B cell (primary cell): ENCODE measurements at regions of chr4 and their contacts with region 1.

Region 1: DNA sequence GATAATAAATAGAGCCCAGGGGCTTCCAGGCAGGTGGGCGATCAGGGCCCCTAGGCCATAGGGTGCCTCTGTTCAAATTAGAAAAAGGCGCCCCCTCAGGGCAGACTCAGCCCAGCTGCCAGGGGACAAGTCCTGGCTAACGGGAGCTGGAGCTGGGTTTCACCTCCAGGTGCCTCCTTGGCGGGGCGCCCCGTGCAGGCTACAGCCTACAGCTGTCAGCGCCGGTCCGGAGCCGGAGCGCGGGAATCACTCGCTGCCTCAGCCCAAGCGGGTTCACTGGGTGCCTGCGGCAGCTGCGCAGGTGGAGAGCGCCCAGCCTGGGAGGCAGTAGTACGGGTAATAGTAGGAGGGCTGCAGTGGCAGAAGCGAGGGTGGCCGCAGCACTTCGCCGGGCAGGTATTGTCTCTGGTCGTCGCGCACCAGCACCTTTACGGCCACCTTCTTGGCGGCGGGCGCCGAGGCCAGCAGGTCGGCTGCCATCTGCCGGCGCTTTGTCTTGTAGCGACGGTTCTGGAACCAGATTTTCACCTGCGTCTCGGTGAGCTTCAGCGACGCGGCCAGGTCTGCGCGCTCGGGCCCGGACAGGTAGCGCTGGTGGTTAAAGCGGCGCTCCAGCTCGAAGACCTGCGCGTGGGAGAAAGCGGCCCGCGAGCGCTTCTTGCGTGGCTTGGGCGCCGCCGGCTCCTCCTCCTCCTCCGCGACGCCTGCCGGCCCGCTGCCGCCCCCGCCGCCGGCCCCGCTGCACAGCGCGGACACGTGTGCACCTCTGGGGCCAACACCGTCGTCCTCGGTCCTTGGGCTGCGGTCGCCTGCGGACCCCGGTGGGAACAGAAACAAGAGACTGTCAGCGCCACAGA is 2.4 kb downstream of the NKX3-2 start:
- DNase-seq: peak; percentile 76
- ATAC-seq: peak; percentile 25
- H3K4me3 ChIP-seq: peak overlapping the region in 2 of 5 experiments; percentile 0 to 21
- H3K4me3 Mint-ChIP-seq: peak overlapping the region; percentile 68
- H3K27ac ChIP-seq: no peak overlapping the region
- H3K27ac Mint-ChIP-seq: peak overlapping the region; percentile 50
- H3K4me1 ChIP-seq: peaks cover 69 to 85% of the 10 kb centered on the region in 2 donors
- H3K4me1 Mint-ChIP-seq: peaks cover 36% of the 10 kb centered on the region
- H3K27me3 ChIP-seq: peaks cover 2 to 95% (median 89%) of the 10 kb centered on the region in 4 experiments
- H3K27me3 Mint-ChIP-seq: peaks cover 61% of the 10 kb centered on the region
- CTCF ChIP-seq: peak; percentile 25

Region 2: GRCh38 chr4:13527981-13528820 is 13.7 kb before region 1 on chr4:
- CTCF ChIA-PET with region 1: interaction called, 8 read pairs
- POLR2A ChIA-PET with region 1: no interaction called
- intact Hi-C with region 1: loop called (anchors 2 kb)
- DNase-seq: peak; percentile 49
- ATAC-seq: peak; percentile 24
- H3K4me3 ChIP-seq: peak overlapping the region in 2 of 5 experiments; percentile 16 to 25
- H3K4me3 Mint-ChIP-seq: peak overlapping the region; percentile 75
- H3K27ac ChIP-seq: no peak overlapping the region
- H3K27ac Mint-ChIP-seq: no peak overlapping the region
- H3K4me1 ChIP-seq: peaks cover 39 to 48% of the 10 kb centered on the region in 2 donors
- H3K4me1 Mint-ChIP-seq: peaks cover 24% of the 10 kb centered on the region
- H3K27me3 ChIP-seq: peaks cover 0 to 99% (median 90%) of the 10 kb centered on the region in 4 experiments
- H3K27me3 Mint-ChIP-seq: peaks cover 82% of the 10 kb centered on the region
- CTCF ChIP-seq: no peak